Activated naive CD4-positive, alpha-beta T cell treated with anti-CD3 and anti-CD28 coated beads for 36 hours (primary cell): ENCODE measurements at regions of chr9 and their contacts with region 1.

Region 1: GRCh38 chr9:127916665-127917613 is at the start of gene ST6GALNAC4:
- DNase-seq: peak; percentile 97
- H3K4me3 Mint-ChIP-seq: peak within 1 kb of the TSS; percentile 83
- H3K27ac Mint-ChIP-seq: peak within 1 kb of the TSS; percentile 84
- H3K4me1 Mint-ChIP-seq: peaks cover 50% of the 10 kb centered on the region
- H3K27me3 Mint-ChIP-seq: no peaks in the 10 kb centered on the region
- total RNA-seq, gene ST6GALNAC4: 22.3 to 24.6 TPM

Region 2: GRCh38 chr9:127586537-127586936 is 330.4 kb before region 1 on chr9:
- CTCF ChIA-PET with region 1: interaction called, 3 read pairs
- intact Hi-C with region 1: loop called (anchors 2 kb)
- DNase-seq: peak; percentile 78
- H3K4me3 Mint-ChIP-seq: no peak overlapping the region
- H3K27ac Mint-ChIP-seq: no peak overlapping the region
- H3K4me1 Mint-ChIP-seq: peaks cover 5% of the 10 kb centered on the region
- H3K27me3 Mint-ChIP-seq: peaks cover 11% of the 10 kb centered on the region

Region 3: DNA sequence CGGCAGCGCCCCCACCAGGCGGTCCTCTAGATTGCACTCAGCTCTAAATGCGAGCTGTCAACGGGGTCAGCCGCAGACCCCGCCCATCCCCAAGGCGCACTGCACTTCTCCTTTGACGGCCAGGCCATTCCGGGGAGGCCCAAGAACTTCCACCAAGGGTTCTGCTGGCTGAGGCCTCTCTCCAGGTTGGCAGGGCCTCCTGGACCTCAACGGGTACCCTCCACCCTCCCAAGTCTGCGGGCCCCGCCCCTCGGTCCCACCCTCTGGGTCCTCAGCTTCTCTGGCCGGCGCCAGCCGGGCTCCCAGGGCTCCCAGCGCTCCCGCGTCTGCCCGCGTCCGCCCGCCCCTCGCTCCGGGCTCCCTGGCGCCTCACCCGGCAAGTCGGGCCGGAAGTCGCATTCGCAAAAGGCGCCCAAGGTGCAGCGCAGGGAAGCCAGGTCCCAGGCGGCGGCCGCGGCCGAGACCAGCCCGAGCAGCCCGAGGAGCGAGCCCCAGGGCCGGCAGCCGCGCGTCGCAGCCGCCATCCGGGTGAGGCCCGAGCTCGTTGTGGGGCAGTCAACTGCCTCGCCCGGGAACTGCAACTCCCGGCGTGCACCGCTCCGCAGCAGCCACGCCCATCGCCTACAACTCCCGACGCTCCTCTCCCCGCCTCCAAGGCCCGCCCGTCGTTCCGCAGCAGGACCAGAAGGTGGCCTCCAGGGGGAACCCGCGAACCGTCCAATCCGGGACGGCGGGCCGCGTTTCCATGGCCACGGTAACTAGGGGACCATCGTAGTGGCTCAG is 182.0 kb before region 1 on chr9 and contains the start of gene TOR2A:
- CTCF ChIA-PET with region 1: interaction called, 20 read pairs
- intact Hi-C with region 1: loop called (anchors 1 kb)
- DNase-seq: peak; percentile 98
- H3K4me3 Mint-ChIP-seq: peak within 1 kb of the TSS; percentile 78
- H3K27ac Mint-ChIP-seq: peak within 1 kb of the TSS; percentile 86
- H3K4me1 Mint-ChIP-seq: peaks cover 13% of the 10 kb centered on the region
- H3K27me3 Mint-ChIP-seq: no peaks in the 10 kb centered on the region
- total RNA-seq, gene TOR2A: 11.8 to 12.7 TPM

Region 4: DNA sequence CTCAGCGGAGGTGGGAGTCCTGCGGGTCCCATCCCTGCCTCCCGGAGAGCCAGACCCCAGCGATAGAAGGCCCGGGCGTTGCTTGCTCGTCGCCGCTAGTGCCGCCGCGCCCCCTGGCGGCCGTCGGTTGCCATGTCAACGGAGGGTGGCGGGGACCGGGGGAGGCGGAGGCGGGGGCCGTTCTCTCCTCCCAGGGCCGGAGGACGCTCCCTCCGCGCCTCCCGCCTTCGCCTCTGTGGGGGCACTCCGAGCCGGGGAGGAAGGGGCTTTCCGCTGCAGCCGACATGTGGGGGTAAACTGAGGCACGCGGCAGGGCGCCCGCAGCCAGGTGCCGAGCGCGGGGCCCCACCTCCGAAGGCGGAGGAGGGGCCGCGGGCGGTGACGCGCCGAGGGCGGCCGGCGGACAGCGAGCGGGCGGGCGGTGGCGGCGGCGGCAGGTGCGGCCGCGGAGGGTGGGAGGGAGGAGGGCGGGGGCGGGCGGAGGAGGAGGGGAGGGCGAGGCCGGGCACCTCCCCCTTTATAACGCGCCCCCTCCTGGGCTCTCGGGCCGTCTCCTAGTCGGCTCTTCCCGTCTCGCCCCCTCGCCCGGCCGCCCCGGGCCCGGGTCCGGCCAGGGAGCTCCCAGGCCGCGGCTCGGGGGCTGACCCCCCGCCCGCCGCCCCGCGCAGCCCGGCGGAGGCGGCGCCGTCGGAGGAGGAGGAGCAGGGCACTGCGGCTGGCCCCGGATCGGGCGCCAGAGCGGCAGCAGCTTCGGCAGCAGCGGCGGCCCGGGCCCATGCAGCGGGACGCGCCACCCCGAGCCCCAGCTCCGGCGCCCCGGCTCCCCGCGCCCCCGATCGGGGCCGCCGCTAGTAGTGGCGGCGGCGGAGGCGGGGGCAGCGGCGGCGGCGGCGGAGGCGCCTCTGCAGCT is 131.7 kb before region 1 on chr9:
- CTCF ChIA-PET with region 1: interaction called, 3 read pairs
- intact Hi-C with region 1: loop called (anchors 1 kb)
- DNase-seq: peak; percentile 91
- H3K4me3 Mint-ChIP-seq: peak overlapping the region; percentile 95
- H3K27ac Mint-ChIP-seq: peak overlapping the region; percentile 91
- H3K4me1 Mint-ChIP-seq: peaks cover 68% of the 10 kb centered on the region
- H3K27me3 Mint-ChIP-seq: no peaks in the 10 kb centered on the region

Region 5: GRCh38 chr9:127869310-127870152 is 47.4 kb before region 1 on chr9:
- CTCF ChIA-PET with region 1: interaction called, 56 read pairs
- intact Hi-C with region 1: loop called (anchors 2 kb)
- DNase-seq: peak; percentile 88
- H3K4me3 Mint-ChIP-seq: no peak overlapping the region
- H3K27ac Mint-ChIP-seq: no peak overlapping the region
- H3K4me1 Mint-ChIP-seq: peaks cover 14% of the 10 kb centered on the region
- H3K27me3 Mint-ChIP-seq: no peaks in the 10 kb centered on the region

Region 6: GRCh38 chr9:127903557-127904475 is 13.1 kb before region 1 on chr9:
- CTCF ChIA-PET with region 1: interaction called, 7 read pairs
- intact Hi-C with region 1: loop called (anchors 1 kb)
- DNase-seq: peak; percentile 96
- H3K4me3 Mint-ChIP-seq: peak overlapping the region; percentile 88
- H3K27ac Mint-ChIP-seq: peak overlapping the region; percentile 98
- H3K4me1 Mint-ChIP-seq: peaks cover 55% of the 10 kb centered on the region
- H3K27me3 Mint-ChIP-seq: no peaks in the 10 kb centered on the region

Region 7: GRCh38 chr9:127991042-127991756 is 74.3 kb after region 1 on chr9:
- CTCF ChIA-PET with region 1: no interaction called
- intact Hi-C with region 1: no loop called
- DNase-seq: no peak
- H3K4me3 Mint-ChIP-seq: no peak overlapping the region
- H3K27ac Mint-ChIP-seq: no peak overlapping the region
- H3K4me1 Mint-ChIP-seq: peaks cover 28% of the 10 kb centered on the region
- H3K27me3 Mint-ChIP-seq: no peaks in the 10 kb centered on the region